Ovary (tissue), 10 donors: ENCODE measurements at regions of chr2 and their contacts with region 1.

Region 1: GRCh38 chr2:96760036-96760985 is at the start of gene CNNM4:
- DNase-seq: peak; percentile 93 to 95 (median 94)
- H3K4me3 ChIP-seq: peak within 1 kb of the TSS; percentile 70
- H3K27ac ChIP-seq: peak within 1 kb of the TSS; percentile 57 to 70
- H3K4me1 ChIP-seq: peaks cover 17% of the 10 kb centered on the region
- H3K27me3 ChIP-seq: no peaks in the 10 kb centered on the region
- CTCF ChIP-seq: no peak
- EP300 ChIP-seq: no peak
- POLR2A ChIP-seq: no peak
- total RNA-seq, gene CNNM4: 3.9 to 8.3 (median 7.0) TPM

Region 2: GRCh38 chr2:96536445-96537065 is 223.8 kb before region 1 on chr2 and contains the start of gene ARID5A:
- intact Hi-C with region 1: loop called in 1 of 4 experiments (anchors 10 kb)
- DNase-seq: peak; percentile 92 to 96 (median 95)
- H3K4me3 ChIP-seq: peak within 1 kb of the TSS; percentile 72
- H3K27ac ChIP-seq: peak within 1 kb of the TSS; percentile 99
- H3K4me1 ChIP-seq: peaks cover 13% of the 10 kb centered on the region
- H3K27me3 ChIP-seq: no peaks in the 10 kb centered on the region
- CTCF ChIP-seq: peak; percentile 16 to 71 (median 57)
- EP300 ChIP-seq: no peak
- POLR2A ChIP-seq: peak; percentile 97
- total RNA-seq, gene ARID5A: 11.7 to 46.1 (median 17.1) TPM

Region 3: DNA sequence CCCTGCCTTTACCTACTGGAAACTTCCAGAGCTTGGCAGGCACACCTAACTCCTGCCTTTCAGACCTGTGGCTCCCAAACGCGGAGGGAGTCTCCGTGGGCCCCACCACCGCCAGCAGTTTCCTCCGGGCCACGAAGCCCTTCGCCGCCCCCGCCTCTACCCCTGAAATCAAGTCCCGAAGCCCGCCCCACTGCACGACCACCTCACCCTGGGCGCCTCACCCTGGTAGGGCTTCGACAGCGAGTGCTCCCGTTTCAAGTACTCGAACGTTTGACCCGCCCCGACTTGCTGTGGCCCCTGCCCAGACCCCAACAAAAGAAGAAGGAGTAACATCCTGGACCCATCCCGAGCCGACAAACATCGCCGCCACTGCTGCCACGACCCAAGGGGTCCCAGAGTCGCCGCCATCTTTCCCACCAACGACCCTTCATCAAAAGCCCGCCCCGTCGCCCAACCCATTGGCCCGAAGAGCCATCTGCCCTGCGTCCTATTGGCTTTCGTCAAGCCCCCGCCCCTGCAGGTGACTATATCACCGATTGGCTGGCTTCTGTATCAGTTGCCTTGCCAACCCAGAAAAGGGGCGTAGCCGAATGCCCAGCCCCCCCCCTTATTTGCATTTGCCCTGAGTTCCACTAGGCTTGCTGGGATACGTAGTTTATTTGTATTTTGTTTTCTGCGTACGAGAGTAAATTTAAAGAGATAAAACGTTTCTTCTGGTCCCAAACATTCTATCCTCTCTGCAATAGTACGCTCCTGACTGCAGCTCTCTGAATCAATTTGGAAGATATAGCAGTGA is 20.5 kb before region 1 on chr2 and contains the start of gene LMAN2L:
- intact Hi-C with region 1: loop called in 1 of 4 experiments (anchors 2 kb)
- DNase-seq: peak; percentile 96 to 99 (median 97)
- H3K4me3 ChIP-seq: peak within 1 kb of the TSS; percentile 85
- H3K27ac ChIP-seq: peak within 1 kb of the TSS; percentile 62 to 68
- H3K4me1 ChIP-seq: peaks cover 4% of the 10 kb centered on the region
- H3K27me3 ChIP-seq: no peaks in the 10 kb centered on the region
- CTCF ChIP-seq: no peak
- EP300 ChIP-seq: no peak
- POLR2A ChIP-seq: peak; percentile 61
- total RNA-seq, gene LMAN2L: 14.8 to 29.4 (median 22.5) TPM

Region 4: GRCh38 chr2:96824079-96824870 is 64.0 kb after region 1 on chr2:
- intact Hi-C with region 1: loop called in 1 of 4 experiments (anchors 2 kb)
- DNase-seq: no peak
- H3K4me3 ChIP-seq: no peak overlapping the region
- H3K27ac ChIP-seq: no peak overlapping the region
- H3K4me1 ChIP-seq: peaks cover 4% of the 10 kb centered on the region
- H3K27me3 ChIP-seq: no peaks in the 10 kb centered on the region
- CTCF ChIP-seq: no peak
- EP300 ChIP-seq: no peak
- POLR2A ChIP-seq: no peak

Region 5: GRCh38 chr2:96839293-96839874 is 79.1 kb after region 1 on chr2:
- intact Hi-C with region 1: no loop called
- DNase-seq: peak in 4 of 5 donors; percentile 28 to 70 (median 48)
- H3K4me3 ChIP-seq: no peak overlapping the region
- H3K27ac ChIP-seq: peak overlapping the region in 1 of 2 donors; percentile 13
- H3K4me1 ChIP-seq: peaks cover 7% of the 10 kb centered on the region
- H3K27me3 ChIP-seq: no peaks in the 10 kb centered on the region
- CTCF ChIP-seq: no peak
- EP300 ChIP-seq: no peak
- POLR2A ChIP-seq: no peak